ENCODE measurements at regions of chr9 and their contacts with region 1.

Region 1: GRCh38 chr9:137772281-137772873 is 105.2 kb upstream of the CACNA1B start:
- DNase-seq: no peak
- H3K4me3 ChIP-seq: no peak overlapping the region
- H3K4me3 Mint-ChIP-seq: no peak overlapping the region
- H3K27ac ChIP-seq: no peak overlapping the region
- H3K27ac Mint-ChIP-seq: peak overlapping the region in 2 of 7 donors; percentile 24 to 25
- H3K4me1 ChIP-seq: no peaks in the 10 kb centered on the region
- H3K4me1 Mint-ChIP-seq: peaks cover 3 to 13% (median 7%) of the 10 kb centered on the region in 4 donors
- H3K27me3 ChIP-seq: no peaks in the 10 kb centered on the region
- H3K27me3 Mint-ChIP-seq: no peaks in the 10 kb centered on the region

Region 2: DNA sequence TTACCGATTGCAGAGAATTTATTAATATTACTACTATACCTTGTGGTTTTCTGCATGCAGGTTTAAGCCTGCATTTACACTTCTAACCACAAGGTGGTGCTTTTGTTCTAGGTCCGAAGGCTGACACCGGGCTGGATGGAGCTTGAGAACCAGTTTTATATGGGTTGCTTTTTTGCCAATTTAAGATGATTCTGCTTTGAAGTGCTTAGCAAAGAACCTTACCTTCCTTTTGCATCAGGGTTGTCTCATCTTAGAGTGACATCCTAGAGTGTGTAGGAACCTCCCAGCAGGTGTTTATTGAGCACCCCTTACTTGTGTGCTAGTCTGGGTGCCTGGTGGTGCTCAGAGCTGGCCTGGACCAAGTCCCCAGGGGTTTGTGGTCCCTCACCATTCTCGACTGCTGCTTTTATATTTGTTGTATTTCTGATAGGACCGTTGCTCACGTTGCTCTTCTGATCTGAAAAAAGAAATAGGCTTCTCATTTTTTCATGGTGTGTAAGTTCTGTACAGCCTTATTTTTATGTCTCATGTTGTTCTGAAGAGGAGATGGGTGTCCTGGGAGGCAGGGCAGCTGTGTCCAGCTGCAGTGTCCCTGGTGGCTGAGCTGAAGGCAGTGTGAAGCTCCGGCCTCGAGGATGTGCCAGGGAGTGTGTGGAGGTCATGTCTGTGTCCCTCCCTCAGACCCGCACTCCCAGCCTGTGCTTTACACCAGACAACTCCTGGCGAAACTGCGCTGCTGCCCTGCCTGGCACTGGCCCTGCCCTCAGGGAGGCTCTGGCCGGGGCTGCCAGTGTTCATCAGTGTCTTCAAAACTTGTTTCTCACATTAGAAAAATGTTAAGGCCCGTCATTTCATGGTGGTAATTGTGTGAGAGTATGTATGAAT is 99.2 kb before region 1 on chr9:
- CTCF ChIA-PET with region 1: interaction called, 5 read pairs
- POLR2A ChIA-PET with region 1: no interaction called
- intact Hi-C with region 1: loop called (anchors 10 kb)
- DNase-seq: peak; percentile 48 to 63 (median 60)
- H3K4me3 ChIP-seq: no peak overlapping the region
- H3K4me3 Mint-ChIP-seq: no peak overlapping the region
- H3K27ac ChIP-seq: no peak overlapping the region
- H3K27ac Mint-ChIP-seq: peak overlapping the region in 5 of 7 donors; percentile 33 to 78 (median 43)
- H3K4me1 ChIP-seq: peaks cover 17% of the 10 kb centered on the region
- H3K4me1 Mint-ChIP-seq: peaks cover 24 to 62% (median 51%) of the 10 kb centered on the region in 4 donors
- H3K27me3 ChIP-seq: no peaks in the 10 kb centered on the region
- H3K27me3 Mint-ChIP-seq: no peaks in the 10 kb centered on the region

Measured in CD4-positive, alpha-beta memory T cell (primary cell).